Pancreas (tissue), 10 donors: ENCODE measurements at regions of chr17 and their contacts with region 1.

Region 1: GRCh38 chr17:74296548-74296936 is 22.5 kb downstream of the DNAI2 start:
- DNase-seq: peak in 5 of 6 donors; percentile 39 to 52 (median 48)
- ATAC-seq: peak; percentile 81 to 94 (median 90)
- H3K4me3 ChIP-seq: no peak overlapping the region
- H3K27ac ChIP-seq: no peak overlapping the region
- H3K4me1 ChIP-seq: no peaks in the 10 kb centered on the region
- H3K27me3 ChIP-seq: no peaks in the 10 kb centered on the region
- CTCF ChIP-seq: peak; percentile 8 to 35 (median 22)

Region 2: GRCh38 chr17:74104921-74105320 is 191.6 kb before region 1 on chr17:
- intact Hi-C with region 1: no loop called
- DNase-seq: no peak
- ATAC-seq: no peak
- H3K4me3 ChIP-seq: no peak overlapping the region
- H3K27ac ChIP-seq: no peak overlapping the region
- H3K4me1 ChIP-seq: no peaks in the 10 kb centered on the region
- H3K27me3 ChIP-seq: no peaks in the 10 kb centered on the region
- CTCF ChIP-seq: no peak

Region 3: GRCh38 chr17:74212913-74213791 is 83.4 kb before region 1 on chr17 and contains the start of gene TTYH2:
- intact Hi-C with region 1: loop called in 1 of 3 experiments (anchors 10 kb)
- DNase-seq: peak; percentile 90 to 95 (median 92)
- ATAC-seq: peak; percentile 91 to 93 (median 92)
- H3K4me3 ChIP-seq: peak within 1 kb of the TSS; percentile 11 to 55 (median 30)
- H3K27ac ChIP-seq: peak within 1 kb of the TSS in 2 of 4 donors; percentile 56 to 62
- H3K4me1 ChIP-seq: peaks cover 0 to 22% (median 13%) of the 10 kb centered on the region in 3 donors
- H3K27me3 ChIP-seq: no peaks in the 10 kb centered on the region
- CTCF ChIP-seq: no peak
- total RNA-seq, gene TTYH2: 5.4 to 13.8 (median 7.7) TPM